AG04450 (cell line): ENCODE measurements at regions of chr6 and their contacts with region 1.

Region 1: GRCh38 chr6:90393232-90393884 is 96.7 kb upstream of the BACH2 start:
- DNase-seq: peak; percentile 32
- H3K4me3 ChIP-seq: no peak overlapping the region
- H3K27ac ChIP-seq: no peak overlapping the region
- H3K27me3 ChIP-seq: peaks cover 10% of the 10 kb centered on the region
- CTCF ChIP-seq: peak; percentile 87

Region 2: DNA sequence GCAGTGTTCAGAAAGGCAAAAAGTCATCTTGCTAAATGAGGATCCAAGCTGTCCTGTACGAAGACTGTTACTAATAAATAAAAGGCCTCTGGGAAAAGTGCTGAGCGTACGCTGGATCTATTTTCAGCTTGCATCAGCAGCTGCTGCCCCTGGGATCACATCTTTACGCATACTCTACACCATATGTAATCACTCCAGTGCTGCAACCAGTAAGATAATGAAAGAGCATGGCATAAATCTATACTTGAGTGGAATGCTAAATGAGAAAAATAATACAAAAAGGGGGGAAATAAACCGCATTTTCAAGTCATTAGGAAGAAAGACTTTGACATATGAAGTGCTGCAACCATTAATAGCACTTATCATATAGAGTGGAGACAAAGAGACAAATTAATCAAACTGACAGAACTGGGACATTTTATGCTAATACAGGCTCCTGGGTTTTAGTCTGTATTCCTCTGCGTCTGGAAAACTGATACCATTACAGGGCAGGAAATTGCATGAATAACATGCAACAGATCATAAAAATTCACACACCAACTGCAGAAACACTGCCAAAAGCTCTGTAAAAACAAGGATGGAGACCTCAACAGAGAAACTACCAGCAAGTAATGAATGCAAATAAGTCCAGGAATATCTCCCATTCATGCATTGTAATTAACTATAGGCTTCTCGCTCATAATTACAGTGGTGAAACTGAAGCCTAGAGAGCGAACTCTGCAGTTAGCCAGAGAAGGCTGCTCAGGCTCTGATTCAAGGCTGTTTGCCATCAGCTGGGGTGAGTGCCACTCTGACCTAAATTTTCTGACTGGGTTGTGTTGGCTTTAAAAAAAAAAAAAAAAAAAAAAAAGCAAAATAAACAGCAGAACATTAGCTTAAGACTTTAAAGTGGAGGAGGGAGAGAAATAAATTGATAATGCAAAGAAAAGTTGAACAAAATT is 415.3 kb before region 1 on chr6:
- CTCF ChIA-PET with region 1: interaction called, 30 read pairs
- POLR2A ChIA-PET with region 1: no interaction called
- DNase-seq: peak; percentile 69
- H3K4me3 ChIP-seq: no peak overlapping the region
- H3K27ac ChIP-seq: peak overlapping the region; percentile 73
- H3K27me3 ChIP-seq: no peaks in the 10 kb centered on the region
- CTCF ChIP-seq: no peak

Region 3: GRCh38 chr6:90375681-90376439 is 17.5 kb before region 1 on chr6:
- CTCF ChIA-PET with region 1: interaction called, 19 read pairs
- POLR2A ChIA-PET with region 1: no interaction called
- DNase-seq: peak; percentile 46
- H3K4me3 ChIP-seq: no peak overlapping the region
- H3K27ac ChIP-seq: peak overlapping the region; percentile 77
- H3K27me3 ChIP-seq: no peaks in the 10 kb centered on the region
- CTCF ChIP-seq: no peak

Region 4: GRCh38 chr6:90403489-90404381 is 10.4 kb after region 1 on chr6:
- CTCF ChIA-PET with region 1: interaction called, 19 read pairs
- POLR2A ChIA-PET with region 1: no interaction called
- DNase-seq: peak; percentile 71
- H3K4me3 ChIP-seq: no peak overlapping the region
- H3K27ac ChIP-seq: no peak overlapping the region
- H3K27me3 ChIP-seq: peaks cover 4% of the 10 kb centered on the region
- CTCF ChIP-seq: peak; percentile 24; the same call in 1 of the 2 replicates

Region 5: DNA sequence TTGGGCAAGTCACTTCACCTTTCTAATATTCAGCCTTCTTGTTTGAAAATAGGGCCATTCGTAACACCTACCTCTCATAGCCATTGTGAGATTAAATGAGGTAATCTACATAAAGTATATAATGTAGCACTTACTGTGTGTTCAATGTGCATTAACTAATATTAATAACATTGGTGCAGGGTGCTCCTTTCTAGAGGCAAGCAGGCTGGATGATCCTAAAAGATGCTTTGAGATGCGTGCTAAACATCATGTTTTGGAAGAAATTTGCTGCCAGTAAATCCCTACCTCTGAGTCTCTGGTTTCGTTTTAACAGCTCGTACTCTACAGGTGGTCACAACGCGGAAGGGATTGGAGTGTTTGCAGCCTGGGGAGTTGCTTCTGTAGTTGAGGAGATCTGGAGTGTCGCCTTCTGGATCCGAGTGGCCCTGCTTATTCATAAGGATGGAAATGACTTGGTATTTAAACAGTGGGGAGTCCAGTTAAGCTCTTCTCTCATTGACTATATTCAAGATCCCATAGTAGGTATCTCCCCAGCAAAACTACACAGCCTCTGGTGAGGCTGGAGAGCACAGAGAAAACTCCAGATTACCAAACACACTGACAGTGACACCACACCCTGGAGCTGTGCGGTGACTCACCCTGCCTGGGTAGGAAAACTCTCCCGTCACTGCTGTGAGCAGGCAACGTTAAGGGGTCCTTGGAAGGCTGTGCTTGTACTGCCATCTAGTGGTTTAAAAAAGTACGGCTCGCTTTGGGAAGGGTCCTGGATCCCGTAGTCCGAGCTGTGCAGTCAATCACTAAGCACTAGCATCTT is 85.6 kb after region 1 on chr6:
- CTCF ChIA-PET with region 1: interaction called, 16 read pairs
- POLR2A ChIA-PET with region 1: no interaction called
- DNase-seq: peak; percentile 89
- H3K4me3 ChIP-seq: no peak overlapping the region
- H3K27ac ChIP-seq: no peak overlapping the region
- H3K27me3 ChIP-seq: no peaks in the 10 kb centered on the region
- CTCF ChIP-seq: peak; percentile 93

Region 6: DNA sequence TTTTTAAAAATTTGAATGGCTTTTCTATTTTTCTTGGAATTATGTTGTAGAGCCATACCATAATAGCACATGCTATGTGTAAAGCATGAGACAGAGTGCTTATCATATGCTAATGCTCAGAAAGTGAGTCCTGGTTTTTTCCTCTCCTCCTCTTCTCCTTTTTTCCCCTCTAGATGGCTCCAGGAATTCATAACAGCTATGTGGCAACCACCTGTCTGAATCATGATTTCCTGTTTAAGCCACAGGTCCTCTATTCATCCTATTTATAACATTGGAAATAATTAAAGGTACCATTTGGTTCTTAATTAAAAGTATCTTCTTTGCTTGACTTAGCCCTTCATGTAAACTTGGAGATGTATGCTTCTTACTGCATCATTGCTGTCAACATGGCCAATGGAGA is 453.5 kb after region 1 on chr6:
- CTCF ChIA-PET with region 1: no interaction called
- POLR2A ChIA-PET with region 1: no interaction called
- DNase-seq: no peak
- H3K4me3 ChIP-seq: no peak overlapping the region
- H3K27ac ChIP-seq: no peak overlapping the region
- H3K27me3 ChIP-seq: no peaks in the 10 kb centered on the region
- CTCF ChIP-seq: no peak